ENCODE measurements at regions of chr17 and their contacts with region 1.

Region 1: GRCh38 chr17:39579318-39580081 is 28.2 kb downstream of the NEUROD2 start:
- DNase-seq: no peak
- ATAC-seq: no peak
- H3K4me3 ChIP-seq: no peak overlapping the region
- H3K4me3 Mint-ChIP-seq: no peak overlapping the region
- H3K27ac ChIP-seq: no peak overlapping the region
- H3K27ac Mint-ChIP-seq: no peak overlapping the region
- H3K4me1 ChIP-seq: no peaks in the 10 kb centered on the region
- H3K4me1 Mint-ChIP-seq: peaks cover 0 to 3% (median 0%) of the 10 kb centered on the region in 3 donors
- H3K27me3 ChIP-seq: peaks cover 0 to 6% of the 10 kb centered on the region in 2 experiments
- H3K27me3 Mint-ChIP-seq: peaks cover 3 to 6% of the 10 kb centered on the region in 2 donors

Region 2: DNA sequence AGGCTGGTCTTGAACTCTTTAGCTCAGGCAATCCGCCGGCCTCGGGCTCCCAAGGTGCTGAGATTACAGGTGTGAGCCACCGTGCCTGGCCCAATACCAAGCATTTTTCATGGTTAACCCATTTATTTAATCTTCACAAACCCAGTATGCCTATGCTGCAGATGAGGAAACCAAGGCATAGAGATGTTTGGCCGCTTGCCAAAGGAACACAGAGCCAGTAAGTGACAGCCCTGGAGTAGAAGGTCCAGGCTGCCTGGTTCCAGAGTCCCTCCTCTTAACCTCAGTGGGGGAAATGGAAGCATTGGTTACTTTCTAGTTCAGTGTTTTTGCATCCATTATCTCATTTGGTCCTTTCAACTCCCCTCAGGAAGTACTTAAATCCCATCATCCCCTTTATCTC is 398.2 kb before region 1 on chr17:
- CTCF ChIA-PET with region 1: no interaction called
- POLR2A ChIA-PET with region 1: interaction called in 1 of 2 experiments, 12 read pairs
- DNase-seq: no peak
- ATAC-seq: no peak
- H3K4me3 ChIP-seq: no peak overlapping the region
- H3K4me3 Mint-ChIP-seq: no peak overlapping the region
- H3K27ac ChIP-seq: no peak overlapping the region
- H3K27ac Mint-ChIP-seq: no peak overlapping the region
- H3K4me1 ChIP-seq: no peaks in the 10 kb centered on the region
- H3K4me1 Mint-ChIP-seq: no peaks in the 10 kb centered on the region
- H3K27me3 ChIP-seq: no peaks in the 10 kb centered on the region
- H3K27me3 Mint-ChIP-seq: no peaks in the 10 kb centered on the region

Region 3: GRCh38 chr17:39335704-39336223 is 243.7 kb before region 1 on chr17:
- CTCF ChIA-PET with region 1: no interaction called
- POLR2A ChIA-PET with region 1: no interaction called
- DNase-seq: no peak
- ATAC-seq: no peak
- H3K4me3 ChIP-seq: no peak overlapping the region
- H3K4me3 Mint-ChIP-seq: no peak overlapping the region
- H3K27ac ChIP-seq: no peak overlapping the region
- H3K27ac Mint-ChIP-seq: no peak overlapping the region
- H3K4me1 ChIP-seq: no peaks in the 10 kb centered on the region
- H3K4me1 Mint-ChIP-seq: peaks cover 0 to 5% (median 2%) of the 10 kb centered on the region in 3 donors
- H3K27me3 ChIP-seq: no peaks in the 10 kb centered on the region
- H3K27me3 Mint-ChIP-seq: no peaks in the 10 kb centered on the region

Region 4: GRCh38 chr17:39655105-39655504 is 75.6 kb after region 1 on chr17:
- CTCF ChIA-PET with region 1: no interaction called
- POLR2A ChIA-PET with region 1: no interaction called
- DNase-seq: no peak
- ATAC-seq: no peak
- H3K4me3 ChIP-seq: no peak overlapping the region
- H3K4me3 Mint-ChIP-seq: no peak overlapping the region
- H3K27ac ChIP-seq: no peak overlapping the region
- H3K27ac Mint-ChIP-seq: peak overlapping the region in 1 of 2 donors; percentile 22
- H3K4me1 ChIP-seq: peaks cover 12 to 54% of the 10 kb centered on the region in 2 experiments
- H3K4me1 Mint-ChIP-seq: peaks cover 54 to 68% (median 65%) of the 10 kb centered on the region in 3 donors
- H3K27me3 ChIP-seq: no peaks in the 10 kb centered on the region
- H3K27me3 Mint-ChIP-seq: no peaks in the 10 kb centered on the region

Region 5: GRCh38 chr17:39667262-39668198 is 88.0 kb after region 1 on chr17:
- CTCF ChIA-PET with region 1: no interaction called
- POLR2A ChIA-PET with region 1: interaction called in 1 of 2 experiments, 10 read pairs
- DNase-seq: peak in 4 of 35 experiments; percentile 22 to 29 (median 24)
- ATAC-seq: peak in 2 of 4 experiments; percentile 11 to 15
- H3K4me3 ChIP-seq: peak overlapping the region in 1 of 2 donors; percentile 30
- H3K4me3 Mint-ChIP-seq: peak overlapping the region; percentile 54 to 60 (median 59)
- H3K27ac ChIP-seq: no peak overlapping the region
- H3K27ac Mint-ChIP-seq: no peak overlapping the region
- H3K4me1 ChIP-seq: peaks cover 2 to 35% of the 10 kb centered on the region in 2 experiments
- H3K4me1 Mint-ChIP-seq: peaks cover 14 to 18% (median 15%) of the 10 kb centered on the region in 3 donors
- H3K27me3 ChIP-seq: peaks cover 0 to 60% of the 10 kb centered on the region in 2 experiments
- H3K27me3 Mint-ChIP-seq: peaks cover 12 to 18% of the 10 kb centered on the region in 2 donors

Region 6: GRCh38 chr17:39704821-39705551 is 125.5 kb after region 1 on chr17:
- CTCF ChIA-PET with region 1: no interaction called
- POLR2A ChIA-PET with region 1: interaction called in 1 of 2 experiments, 15 read pairs
- DNase-seq: no peak
- ATAC-seq: no peak
- H3K4me3 ChIP-seq: no peak overlapping the region
- H3K4me3 Mint-ChIP-seq: no peak overlapping the region
- H3K27ac ChIP-seq: no peak overlapping the region
- H3K27ac Mint-ChIP-seq: no peak overlapping the region
- H3K4me1 ChIP-seq: peaks cover 9 to 50% of the 10 kb centered on the region in 2 experiments
- H3K4me1 Mint-ChIP-seq: peaks cover 19 to 43% (median 25%) of the 10 kb centered on the region in 3 donors
- H3K27me3 ChIP-seq: peaks cover 4 to 26% of the 10 kb centered on the region in 2 experiments
- H3K27me3 Mint-ChIP-seq: peaks cover 10 to 21% of the 10 kb centered on the region in 2 donors

Region 7: DNA sequence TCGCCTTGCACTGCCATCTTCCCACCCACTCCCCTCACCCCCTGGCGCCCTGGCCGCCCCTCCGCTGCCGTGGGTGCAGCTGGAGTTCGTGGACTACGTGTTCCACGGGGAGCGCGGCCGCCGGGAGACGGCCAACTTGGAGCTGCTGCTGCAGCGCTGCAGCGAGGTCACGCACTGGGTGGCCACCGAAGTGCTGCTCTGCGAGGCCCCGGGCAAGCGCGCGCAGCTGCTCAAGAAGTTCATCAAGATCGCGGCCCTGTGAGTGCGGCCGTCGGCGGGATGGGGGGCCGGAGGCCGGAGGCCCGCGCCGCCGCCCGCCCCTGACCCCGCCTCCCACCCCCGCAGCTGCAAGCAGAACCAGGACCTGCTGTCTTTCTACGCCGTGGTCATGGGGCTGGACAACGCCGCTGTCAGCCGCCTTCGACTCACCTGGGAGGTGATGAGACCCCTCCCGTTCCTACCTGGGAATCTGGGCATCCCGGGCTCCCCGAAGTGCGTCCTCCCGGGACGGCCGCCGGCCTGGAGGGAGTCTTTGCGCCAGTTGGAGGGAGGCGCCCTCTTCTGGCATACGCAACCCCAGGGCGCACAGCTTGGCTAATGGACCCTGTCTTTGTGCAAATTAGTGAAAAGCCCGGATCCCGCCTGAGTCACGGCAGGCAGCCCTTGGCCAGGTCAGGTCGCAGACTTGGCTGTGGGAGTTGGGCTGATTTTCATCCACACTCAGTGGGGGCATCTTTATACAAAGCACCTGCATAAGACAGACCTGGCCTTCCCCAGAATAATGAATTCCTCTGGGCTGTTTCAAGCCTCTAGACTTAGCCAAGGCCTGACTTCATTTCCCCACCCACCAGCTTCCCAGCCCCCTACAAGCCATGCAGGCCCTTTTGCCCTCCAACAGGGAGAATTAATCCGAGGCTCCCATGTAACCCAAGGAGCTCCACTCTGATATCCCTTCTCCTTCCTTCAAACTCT is 612.0 kb after region 1 on chr17:
- CTCF ChIA-PET with region 1: no interaction called
- POLR2A ChIA-PET with region 1: no interaction called
- DNase-seq: peak in 34 of 35 experiments; percentile 22 to 77 (median 48)
- ATAC-seq: peak; percentile 85 to 91 (median 88)
- H3K4me3 ChIP-seq: peak overlapping the region; percentile 51 to 64
- H3K4me3 Mint-ChIP-seq: peak overlapping the region; percentile 86 to 95 (median 92)
- H3K27ac ChIP-seq: no peak overlapping the region
- H3K27ac Mint-ChIP-seq: peak overlapping the region in 1 of 2 donors; percentile 49
- H3K4me1 ChIP-seq: peaks cover 0 to 15% of the 10 kb centered on the region in 2 experiments
- H3K4me1 Mint-ChIP-seq: peaks cover 4 to 18% (median 9%) of the 10 kb centered on the region in 3 donors
- H3K27me3 ChIP-seq: peaks cover 0 to 15% of the 10 kb centered on the region in 2 experiments
- H3K27me3 Mint-ChIP-seq: no peaks in the 10 kb centered on the region

Measured in T-cell (primary cell).